Activated CD8-positive, alpha-beta T cell treated with anti-CD3 and anti-CD28 coated beads for 36 hours (primary cell): ENCODE measurements at regions of chr16 and their contacts with region 1.

Region 1: DNA sequence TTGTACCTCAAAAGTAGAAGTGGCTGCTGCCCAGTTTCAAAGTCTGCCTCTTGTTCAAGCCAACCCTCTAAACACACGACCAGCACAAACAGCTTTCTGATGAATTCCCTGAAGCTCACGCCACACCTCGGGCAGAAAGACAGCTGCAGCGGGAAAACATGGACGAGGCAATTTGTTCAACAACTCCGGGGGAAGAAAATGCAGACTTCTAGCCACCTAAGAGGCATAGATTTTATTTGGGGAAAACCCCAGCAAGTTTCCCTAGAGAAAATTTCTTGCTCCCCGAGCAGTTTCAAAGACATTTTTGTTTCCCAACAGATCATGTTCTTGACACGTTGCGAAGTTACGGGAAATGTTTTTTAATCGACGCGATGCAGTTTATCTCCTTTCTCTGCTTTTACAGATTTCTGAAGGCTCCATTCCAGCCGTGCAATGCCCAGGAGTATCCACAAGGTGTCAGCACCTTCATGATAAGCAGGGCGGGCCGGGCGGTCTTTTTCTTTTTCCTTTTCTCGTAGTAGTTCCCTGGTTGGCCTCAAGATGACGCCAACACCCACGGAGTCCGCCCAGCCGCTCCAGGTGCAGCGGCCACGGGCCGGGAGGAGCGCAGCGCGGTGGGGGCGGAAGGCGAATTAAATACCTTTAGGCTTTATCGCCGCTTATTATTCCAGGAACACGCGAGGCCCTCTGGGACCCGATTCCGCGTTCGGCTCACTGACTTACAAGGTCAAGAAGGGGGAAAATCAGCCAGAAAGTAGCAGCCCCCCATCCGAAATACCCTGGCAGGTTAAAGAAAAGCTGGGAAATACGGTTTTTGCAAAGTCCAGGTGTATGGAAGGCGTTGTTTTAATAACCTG is 2.9 kb upstream of the FOXC2 start:
- DNase-seq: peak; percentile 96
- ATAC-seq: peak; percentile 97
- H3K4me3 Mint-ChIP-seq: no peak overlapping the region
- H3K27ac Mint-ChIP-seq: no peak overlapping the region
- H3K4me1 Mint-ChIP-seq: peaks cover 11% of the 10 kb centered on the region
- H3K27me3 Mint-ChIP-seq: peaks cover 47% of the 10 kb centered on the region
- CTCF ChIP-seq: peak; percentile 100

Region 2: GRCh38 chr16:86444261-86444660 is 119.5 kb before region 1 on chr16:
- CTCF ChIA-PET with region 1: no interaction called
- POLR2A ChIA-PET with region 1: no interaction called
- intact Hi-C with region 1: no loop called
- DNase-seq: no peak
- ATAC-seq: no peak
- H3K4me3 Mint-ChIP-seq: no peak overlapping the region
- H3K27ac Mint-ChIP-seq: no peak overlapping the region
- H3K4me1 Mint-ChIP-seq: peaks cover 9% of the 10 kb centered on the region
- H3K27me3 Mint-ChIP-seq: peaks cover 23% of the 10 kb centered on the region
- CTCF ChIP-seq: no peak

Region 3: DNA sequence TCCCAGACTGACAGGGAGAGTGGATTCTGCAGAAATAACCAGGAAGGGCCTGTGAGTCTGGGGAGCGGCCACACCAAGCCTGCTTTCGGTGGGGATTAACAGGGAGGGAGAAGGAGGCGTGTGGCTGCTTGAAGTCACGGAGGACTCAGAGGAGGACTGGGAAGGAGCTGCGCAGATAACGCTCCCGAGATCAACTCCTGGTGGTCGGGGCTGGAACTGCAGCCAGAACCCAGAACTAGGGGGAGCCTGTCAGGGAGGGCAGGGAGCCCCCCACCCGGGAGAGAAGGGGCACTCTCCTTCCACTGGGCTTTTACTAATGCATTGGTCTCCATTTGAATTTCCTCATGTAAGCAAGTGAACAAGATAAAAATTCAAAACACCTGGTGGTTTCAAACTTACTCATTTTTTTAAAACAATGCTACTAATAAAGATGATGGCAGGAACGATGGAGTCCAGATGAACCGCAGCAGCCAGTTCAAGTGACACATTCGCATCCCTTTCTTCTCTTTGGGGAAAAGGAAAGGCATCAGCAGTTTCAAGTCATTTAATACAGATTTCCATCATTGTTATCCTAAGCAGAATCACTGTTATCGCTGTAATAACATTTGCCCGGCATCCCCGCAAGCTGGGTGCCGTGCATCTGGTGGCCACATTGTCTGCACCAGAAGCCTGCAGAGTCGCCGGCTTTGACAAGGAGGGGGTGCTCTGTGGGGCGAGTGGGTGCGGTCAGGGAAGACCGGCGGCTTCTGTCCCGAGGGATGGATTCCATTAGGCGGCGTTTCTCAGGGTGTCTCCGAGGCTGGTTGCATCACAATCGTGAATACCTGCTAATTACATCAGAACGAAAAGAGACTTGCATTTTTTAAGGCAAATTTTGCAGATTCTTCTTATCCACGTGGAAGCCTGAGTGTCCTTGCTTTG is 197.7 kb after region 1 on chr16:
- CTCF ChIA-PET with region 1: no interaction called
- POLR2A ChIA-PET with region 1: no interaction called
- intact Hi-C with region 1: loop called (anchors 10 kb)
- DNase-seq: peak; percentile 63
- ATAC-seq: peak; percentile 69
- H3K4me3 Mint-ChIP-seq: no peak overlapping the region
- H3K27ac Mint-ChIP-seq: no peak overlapping the region
- H3K4me1 Mint-ChIP-seq: peaks cover 3% of the 10 kb centered on the region
- H3K27me3 Mint-ChIP-seq: peaks cover 33% of the 10 kb centered on the region
- CTCF ChIP-seq: peak; percentile 84

Region 4: DNA sequence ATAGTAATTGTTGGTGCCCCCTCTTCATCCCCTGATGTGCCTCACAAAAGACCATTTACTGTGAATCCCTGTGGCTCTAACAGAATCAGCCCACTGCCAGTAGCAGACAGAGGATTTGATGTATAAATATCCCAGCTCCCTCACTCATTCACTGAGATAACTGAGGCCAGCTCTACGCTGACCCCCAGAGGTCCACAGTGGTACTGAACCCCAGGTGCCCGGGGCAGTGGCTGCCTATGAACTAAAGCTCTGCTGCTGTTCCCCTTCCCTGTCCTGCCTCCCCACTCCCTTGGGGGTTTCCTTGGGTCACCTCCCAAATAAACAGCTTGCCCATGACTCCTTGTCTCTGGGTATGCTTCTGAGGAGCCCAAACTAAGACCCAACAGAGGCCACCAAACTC is 310.4 kb after region 1 on chr16:
- CTCF ChIA-PET with region 1: interaction called, 14 read pairs
- POLR2A ChIA-PET with region 1: no interaction called
- intact Hi-C with region 1: loop called (anchors 2 kb)
- DNase-seq: peak; percentile 50
- ATAC-seq: peak; percentile 79
- H3K4me3 Mint-ChIP-seq: no peak overlapping the region
- H3K27ac Mint-ChIP-seq: no peak overlapping the region
- H3K4me1 Mint-ChIP-seq: no peaks in the 10 kb centered on the region
- H3K27me3 Mint-ChIP-seq: peaks cover 26% of the 10 kb centered on the region
- CTCF ChIP-seq: peak; percentile 60

Region 5: GRCh38 chr16:87062569-87063442 is 499.1 kb after region 1 on chr16:
- CTCF ChIA-PET with region 1: interaction called, 45 read pairs
- POLR2A ChIA-PET with region 1: no interaction called
- intact Hi-C with region 1: loop called (anchors 5 kb)
- DNase-seq: peak; percentile 77
- ATAC-seq: peak; percentile 62
- H3K4me3 Mint-ChIP-seq: no peak overlapping the region
- H3K27ac Mint-ChIP-seq: no peak overlapping the region
- H3K4me1 Mint-ChIP-seq: no peaks in the 10 kb centered on the region
- H3K27me3 Mint-ChIP-seq: peaks cover 38% of the 10 kb centered on the region
- CTCF ChIP-seq: peak; percentile 78